Activated T-helper 2 cell treated with anti-CD3 and anti-CD28 coated beads, Interferon-gamma antibody, Interleukin-2, Interleukin-4, amounts not matched to agents 10 μg/mL and 5 μg/mL and 100 μg/mL, durations not matched to agents 14 hours and 24 hours and 36 hours (primary cell): ENCODE measurements at regions of chr15 and their contacts with region 1.

Region 1: GRCh38 chr15:50066192-50066591 is 52.8 kb downstream of the ATP8B4 start:
- DNase-seq: peak; percentile 30
- H3K4me3 Mint-ChIP-seq: peak overlapping the region; percentile 18
- H3K27ac Mint-ChIP-seq: peak overlapping the region; percentile 95
- H3K4me1 Mint-ChIP-seq: peaks cover 58% of the 10 kb centered on the region
- H3K27me3 Mint-ChIP-seq: no peaks in the 10 kb centered on the region

Region 2: DNA sequence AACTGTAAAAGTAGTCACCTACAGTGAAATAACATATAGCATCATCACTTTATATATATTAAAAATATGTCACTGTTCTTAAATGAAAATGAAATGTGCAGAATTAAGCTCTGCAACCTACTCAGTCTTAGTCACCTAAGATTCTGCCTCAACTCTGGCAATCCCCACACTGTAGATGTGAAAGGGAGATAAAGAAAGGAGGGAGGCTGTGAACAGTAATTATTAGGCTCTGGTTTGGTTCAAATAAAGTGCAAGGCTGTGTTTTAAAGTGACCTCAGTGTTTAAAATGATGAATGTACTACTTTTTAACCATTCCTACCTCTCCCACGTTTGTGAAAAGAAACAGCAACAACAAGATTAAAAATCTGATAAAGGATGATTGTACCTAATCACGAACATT is 19.3 kb before region 1 on chr15:
- intact Hi-C with region 1: loop called (anchors 2 kb)
- DNase-seq: no peak
- H3K4me3 Mint-ChIP-seq: no peak overlapping the region
- H3K27ac Mint-ChIP-seq: peak overlapping the region; percentile 79
- H3K4me1 Mint-ChIP-seq: peaks cover 40% of the 10 kb centered on the region
- H3K27me3 Mint-ChIP-seq: no peaks in the 10 kb centered on the region

Region 3: GRCh38 chr15:50107591-50108408 is 41.6 kb after region 1 on chr15:
- intact Hi-C with region 1: loop called (anchors 1 kb)
- DNase-seq: peak; percentile 29
- H3K4me3 Mint-ChIP-seq: peak overlapping the region; percentile 61
- H3K27ac Mint-ChIP-seq: peak overlapping the region; percentile 94
- H3K4me1 Mint-ChIP-seq: peaks cover 83% of the 10 kb centered on the region
- H3K27me3 Mint-ChIP-seq: no peaks in the 10 kb centered on the region